AG04449 (cell line): ENCODE measurements at regions of chr16 and their contacts with region 1.

Region 1: GRCh38 chr16:56532714-56533113 is 12.9 kb upstream of the BBS2 start:
- DNase-seq: no peak
- H3K4me3 ChIP-seq: no peak overlapping the region
- CTCF ChIP-seq: no peak

Region 2: DNA sequence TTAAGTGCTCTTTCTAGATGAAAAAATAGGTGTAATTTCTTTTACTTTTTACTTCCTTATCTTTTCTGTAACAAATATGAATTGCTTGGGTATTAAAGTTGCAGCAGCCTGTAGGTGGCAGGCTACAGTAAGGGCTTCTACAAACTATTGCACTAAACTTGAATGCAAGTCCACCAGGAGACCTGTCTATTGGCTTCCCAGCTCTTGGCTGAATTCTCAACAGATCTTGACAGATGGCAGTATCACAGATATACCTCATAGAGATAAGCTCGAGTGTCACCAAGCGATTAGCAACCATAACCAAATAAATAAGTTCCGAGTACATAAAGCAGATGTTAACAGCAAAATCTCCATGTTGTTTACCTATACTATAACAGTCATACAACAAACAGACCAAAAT is 18.7 kb before region 1 on chr16:
- CTCF ChIA-PET with region 1: interaction called, 12 read pairs
- POLR2A ChIA-PET with region 1: no interaction called
- DNase-seq: peak; percentile 16
- H3K4me3 ChIP-seq: no peak overlapping the region
- CTCF ChIP-seq: peak; percentile 58

Region 3: GRCh38 chr16:56519459-56520250 is 13.1 kb before region 1 on chr16 and contains the start of gene BBS2:
- CTCF ChIA-PET with region 1: interaction called, 11 read pairs
- POLR2A ChIA-PET with region 1: no interaction called
- DNase-seq: no peak
- H3K4me3 ChIP-seq: peak within 1 kb of the TSS; percentile 92
- CTCF ChIP-seq: no peak

Region 4: DNA sequence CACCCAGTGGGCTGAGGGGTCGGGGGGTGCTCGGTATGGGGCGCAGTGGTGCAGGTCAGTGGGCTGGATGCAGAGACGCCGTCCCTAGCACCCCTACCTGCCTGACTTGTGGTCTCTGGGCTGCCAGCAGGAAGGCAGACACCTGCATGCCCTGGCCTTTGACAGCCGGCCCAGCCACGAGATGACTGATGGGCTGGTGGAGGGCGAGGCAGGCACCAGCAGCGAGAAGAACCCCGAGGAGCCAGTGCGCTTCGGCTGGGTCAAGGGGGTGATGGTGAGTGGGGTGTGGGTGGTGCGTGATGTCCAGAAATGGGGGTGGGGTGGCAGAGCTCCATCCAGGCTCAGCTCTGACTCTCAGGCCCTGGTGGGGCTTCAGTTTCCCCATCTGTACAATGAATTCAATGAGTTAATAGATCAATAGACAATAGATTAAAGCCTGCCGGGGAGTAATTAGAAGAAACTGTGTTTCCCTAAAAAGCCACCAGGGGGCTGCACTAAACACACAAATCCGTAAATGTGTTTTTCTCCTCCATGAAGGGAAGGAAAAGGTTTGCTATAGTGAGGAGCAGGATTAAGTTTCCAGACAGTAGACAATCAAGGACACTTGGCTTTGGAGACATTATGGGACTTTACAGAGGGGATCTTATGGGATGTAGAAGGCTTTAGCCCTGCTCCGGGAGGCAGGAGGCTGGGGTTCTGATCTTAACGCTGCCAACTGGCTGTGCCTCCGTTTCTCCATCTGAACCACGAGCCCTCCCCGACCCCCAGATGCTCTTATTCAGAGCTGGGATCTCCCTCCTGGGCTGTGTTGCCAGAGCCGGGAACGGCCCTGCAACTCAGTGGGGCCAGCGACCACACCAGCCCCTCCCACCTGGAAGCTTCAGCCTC is 334.5 kb after region 1 on chr16:
- CTCF ChIA-PET with region 1: no interaction called
- POLR2A ChIA-PET with region 1: no interaction called
- DNase-seq: no peak
- H3K4me3 ChIP-seq: no peak overlapping the region
- CTCF ChIP-seq: peak; percentile 49